CD8-positive, alpha-beta T cell (primary cell): ENCODE measurements at regions of chr20 and their contacts with region 1.

Region 1: GRCh38 chr20:31723319-31724078 is 831 bp upstream of the BCL2L1 start:
- DNase-seq: peak; percentile 96 to 99 (median 98)
- ATAC-seq: peak; percentile 93
- H3K4me3 ChIP-seq: peak overlapping the region; percentile 64 to 85
- H3K4me3 Mint-ChIP-seq: peak overlapping the region; percentile 86
- H3K27ac ChIP-seq: peak overlapping the region; percentile 91 to 94
- H3K27ac Mint-ChIP-seq: peak overlapping the region; percentile 94
- H3K4me1 ChIP-seq: peaks cover 38% of the 10 kb centered on the region
- H3K4me1 Mint-ChIP-seq: peaks cover 43% of the 10 kb centered on the region
- H3K27me3 ChIP-seq: no peaks in the 10 kb centered on the region
- H3K27me3 Mint-ChIP-seq: no peaks in the 10 kb centered on the region
- CTCF ChIP-seq: no peak

Region 2: GRCh38 chr20:31514159-31515071 is 209.1 kb before region 1 on chr20 and contains the start of gene HM13:
- CTCF ChIA-PET with region 1: no interaction called
- POLR2A ChIA-PET with region 1: no interaction called
- intact Hi-C with region 1: loop called (anchors 1 kb)
- DNase-seq: peak; percentile 75 to 95 (median 88)
- ATAC-seq: peak; percentile 84
- H3K4me3 ChIP-seq: peak within 1 kb of the TSS; percentile 77 to 79
- H3K4me3 Mint-ChIP-seq: no peak within 1 kb of the TSS
- H3K27ac ChIP-seq: peak within 1 kb of the TSS; percentile 68 to 77
- H3K27ac Mint-ChIP-seq: peak within 1 kb of the TSS; percentile 46
- H3K4me1 ChIP-seq: peaks cover 31% of the 10 kb centered on the region
- H3K4me1 Mint-ChIP-seq: peaks cover 9% of the 10 kb centered on the region
- H3K27me3 ChIP-seq: no peaks in the 10 kb centered on the region
- H3K27me3 Mint-ChIP-seq: no peaks in the 10 kb centered on the region
- CTCF ChIP-seq: peak; percentile 91
- total RNA-seq, gene HM13: 106 to 107 TPM

Region 3: GRCh38 chr20:31605031-31605901 is 118.2 kb before region 1 on chr20 and contains the start of gene ID1:
- CTCF ChIA-PET with region 1: no interaction called
- POLR2A ChIA-PET with region 1: no interaction called
- intact Hi-C with region 1: loop called in 1 of 2 experiments (anchors 1 kb)
- DNase-seq: peak; percentile 78 to 93 (median 89)
- ATAC-seq: peak; percentile 89
- H3K4me3 ChIP-seq: peak within 1 kb of the TSS; percentile 57 to 68
- H3K4me3 Mint-ChIP-seq: peak within 1 kb of the TSS; percentile 93
- H3K27ac ChIP-seq: peak within 1 kb of the TSS in 1 of 2 experiments; percentile 30
- H3K27ac Mint-ChIP-seq: peak within 1 kb of the TSS; percentile 60
- H3K4me1 ChIP-seq: peaks cover 24% of the 10 kb centered on the region
- H3K4me1 Mint-ChIP-seq: peaks cover 26% of the 10 kb centered on the region
- H3K27me3 ChIP-seq: peaks cover 5 to 27% of the 10 kb centered on the region in 2 experiments
- H3K27me3 Mint-ChIP-seq: peaks cover 43% of the 10 kb centered on the region
- CTCF ChIP-seq: no peak
- total RNA-seq, gene ID1: 8.1 to 11.0 TPM

Region 4: DNA sequence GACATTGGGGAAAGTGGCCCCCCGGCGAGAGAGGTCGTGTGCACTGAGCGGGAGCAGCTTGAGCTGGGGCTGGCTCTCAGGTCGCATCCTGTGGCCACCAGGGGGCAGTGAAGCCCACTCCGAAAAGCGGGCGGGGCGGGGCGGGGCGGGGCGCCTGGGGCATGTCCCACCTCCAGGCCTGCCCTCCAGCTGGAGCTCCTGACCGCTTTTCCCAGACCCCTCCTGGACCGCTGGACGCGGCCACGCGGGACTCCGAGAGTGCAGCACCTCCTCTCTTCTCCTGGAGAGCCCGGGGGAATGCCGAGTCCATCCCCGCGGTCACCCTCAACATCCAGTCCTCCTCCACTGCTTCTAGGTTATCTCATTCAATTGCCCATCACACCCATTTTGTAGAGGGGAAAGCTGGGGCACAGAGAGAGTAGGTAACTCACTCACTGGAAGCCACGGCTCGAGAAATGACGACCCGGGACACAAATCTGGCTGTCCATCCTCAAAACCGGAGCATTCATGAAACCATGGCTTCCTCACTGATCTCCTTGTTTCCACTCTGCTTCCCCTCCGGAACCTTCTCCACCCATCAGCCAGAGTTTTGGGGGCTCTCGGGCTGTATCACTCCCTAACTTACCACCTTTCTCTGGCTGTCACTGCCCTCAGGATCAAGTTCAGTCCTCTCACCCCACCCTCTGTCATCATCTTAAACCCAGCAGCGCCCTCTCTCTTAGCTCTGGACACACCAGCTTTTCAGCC is 61.7 kb before region 1 on chr20:
- CTCF ChIA-PET with region 1: interaction called, 270 read pairs
- POLR2A ChIA-PET with region 1: interaction called, 59 read pairs
- intact Hi-C with region 1: loop called (anchors 1 kb)
- DNase-seq: peak; percentile 61 to 90 (median 82)
- ATAC-seq: peak; percentile 93
- H3K4me3 ChIP-seq: peak overlapping the region; percentile 47 to 61
- H3K4me3 Mint-ChIP-seq: peak overlapping the region; percentile 74
- H3K27ac ChIP-seq: peak overlapping the region; percentile 18 to 62
- H3K27ac Mint-ChIP-seq: peak overlapping the region; percentile 78
- H3K4me1 ChIP-seq: peaks cover 21% of the 10 kb centered on the region
- H3K4me1 Mint-ChIP-seq: peaks cover 34% of the 10 kb centered on the region
- H3K27me3 ChIP-seq: no peaks in the 10 kb centered on the region
- H3K27me3 Mint-ChIP-seq: no peaks in the 10 kb centered on the region
- CTCF ChIP-seq: peak; percentile 64

Region 5: GRCh38 chr20:31695849-31696804 is 27.4 kb before region 1 on chr20:
- CTCF ChIA-PET with region 1: interaction called, 22 read pairs
- POLR2A ChIA-PET with region 1: interaction called, 5 read pairs
- intact Hi-C with region 1: no loop called
- DNase-seq: no peak
- ATAC-seq: no peak
- H3K4me3 ChIP-seq: no peak overlapping the region
- H3K4me3 Mint-ChIP-seq: no peak overlapping the region
- H3K27ac ChIP-seq: peak overlapping the region in 1 of 2 experiments; percentile 63
- H3K27ac Mint-ChIP-seq: peak overlapping the region; percentile 82
- H3K4me1 ChIP-seq: peaks cover 27% of the 10 kb centered on the region
- H3K4me1 Mint-ChIP-seq: peaks cover 55% of the 10 kb centered on the region
- H3K27me3 ChIP-seq: no peaks in the 10 kb centered on the region
- H3K27me3 Mint-ChIP-seq: no peaks in the 10 kb centered on the region
- CTCF ChIP-seq: no peak

Region 6: DNA sequence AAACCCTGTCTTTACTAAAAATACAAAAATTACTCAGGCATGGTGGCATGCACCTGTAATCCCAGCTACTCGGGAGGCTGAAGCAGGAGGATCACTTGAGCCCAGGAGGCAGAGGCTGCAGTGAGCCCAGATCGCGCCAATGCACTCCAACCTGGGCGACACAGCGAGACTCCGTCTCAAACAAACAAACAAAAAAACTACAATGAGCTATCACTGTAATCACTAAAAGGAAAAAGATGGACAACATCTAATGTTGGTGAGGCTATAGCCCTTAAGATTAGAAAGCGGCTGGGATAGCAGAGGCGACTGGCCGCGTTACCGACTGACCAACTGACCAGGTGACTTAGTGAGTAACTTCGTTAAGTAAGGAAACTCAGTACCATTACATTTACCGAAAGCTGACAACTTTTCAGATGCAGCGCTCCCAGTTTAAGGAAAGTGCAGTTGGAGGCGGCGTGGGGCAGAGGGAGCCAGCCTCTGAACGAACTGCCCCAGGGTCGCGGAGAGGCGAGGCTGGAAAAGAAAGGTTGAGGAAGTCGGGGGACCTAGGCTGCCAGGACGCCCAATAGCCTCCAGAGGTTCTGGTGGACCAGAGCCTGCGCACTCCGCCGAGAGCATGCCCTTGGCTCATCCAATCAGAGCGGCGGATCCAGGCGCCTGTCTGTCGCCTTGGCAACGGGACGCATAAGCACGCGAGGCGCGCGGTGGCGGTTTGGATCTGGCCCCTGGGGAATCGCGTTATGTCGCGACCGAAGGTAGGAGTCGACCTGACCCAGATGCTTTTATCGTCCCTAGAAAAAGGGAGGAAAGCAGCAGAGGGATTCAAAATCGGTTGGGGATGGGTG is 155.9 kb after region 1 on chr20:
- CTCF ChIA-PET with region 1: no interaction called
- POLR2A ChIA-PET with region 1: no interaction called
- intact Hi-C with region 1: loop called in 1 of 2 experiments (anchors 2 kb)
- DNase-seq: peak; percentile 50 to 90 (median 74)
- ATAC-seq: peak; percentile 84
- H3K4me3 ChIP-seq: peak overlapping the region; percentile 59 to 73
- H3K4me3 Mint-ChIP-seq: peak overlapping the region; percentile 91
- H3K27ac ChIP-seq: no peak overlapping the region
- H3K27ac Mint-ChIP-seq: peak overlapping the region; percentile 63
- H3K4me1 ChIP-seq: no peaks in the 10 kb centered on the region
- H3K4me1 Mint-ChIP-seq: peaks cover 11% of the 10 kb centered on the region
- H3K27me3 ChIP-seq: no peaks in the 10 kb centered on the region
- H3K27me3 Mint-ChIP-seq: peaks cover 3% of the 10 kb centered on the region
- CTCF ChIP-seq: no peak

Region 7: DNA sequence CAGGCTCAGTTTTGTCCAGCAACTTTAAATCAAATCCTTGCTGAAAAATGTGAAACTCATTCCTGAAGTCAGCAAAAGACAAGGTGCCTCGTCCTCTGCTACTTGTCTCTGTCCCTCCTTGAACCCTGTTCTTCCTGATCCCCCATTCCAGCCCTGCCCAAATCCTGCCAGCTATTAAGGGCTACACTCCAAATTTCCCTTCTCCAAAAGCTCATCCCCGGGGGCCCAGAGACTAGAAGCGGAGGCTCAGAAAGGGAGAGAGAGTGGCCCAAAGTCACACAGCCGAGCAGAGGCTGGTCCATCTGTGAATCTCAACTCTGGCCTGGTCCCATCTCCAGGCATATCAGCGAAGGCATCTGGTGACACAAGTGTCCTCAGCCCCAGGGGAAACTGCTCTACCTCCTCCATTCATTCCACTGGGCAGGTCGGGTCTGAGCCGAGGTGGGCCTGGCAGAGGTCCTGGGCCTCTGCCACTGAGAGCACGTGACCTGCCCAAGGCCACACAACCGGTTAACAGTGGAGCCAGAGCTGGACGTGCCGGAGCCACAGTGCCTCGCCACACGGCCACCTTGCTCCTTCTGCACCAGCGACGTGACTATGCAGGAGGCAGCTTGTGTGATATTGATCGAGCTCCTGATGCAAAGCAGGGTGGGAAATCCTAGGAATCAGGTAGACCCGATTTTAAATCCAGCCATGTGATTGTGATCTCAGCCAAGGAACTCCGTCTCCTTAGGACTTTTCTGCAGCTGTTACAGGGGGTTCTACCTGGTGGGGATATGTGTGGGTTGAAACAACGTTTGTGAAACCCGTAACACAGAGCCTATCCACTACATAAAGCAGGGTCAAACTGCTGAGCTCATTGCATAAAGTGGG is 833.0 kb after region 1 on chr20:
- CTCF ChIA-PET with region 1: no interaction called
- POLR2A ChIA-PET with region 1: no interaction called
- intact Hi-C with region 1: no loop called
- DNase-seq: no peak
- ATAC-seq: no peak
- H3K4me3 ChIP-seq: no peak overlapping the region
- H3K4me3 Mint-ChIP-seq: no peak overlapping the region
- H3K27ac ChIP-seq: no peak overlapping the region
- H3K27ac Mint-ChIP-seq: peak overlapping the region; percentile 78
- H3K4me1 ChIP-seq: peaks cover 66% of the 10 kb centered on the region
- H3K4me1 Mint-ChIP-seq: peaks cover 77% of the 10 kb centered on the region
- H3K27me3 ChIP-seq: no peaks in the 10 kb centered on the region
- H3K27me3 Mint-ChIP-seq: no peaks in the 10 kb centered on the region
- CTCF ChIP-seq: no peak